ENCODE measurements at regions of chr15 and their contacts with region 1.

Region 1: DNA sequence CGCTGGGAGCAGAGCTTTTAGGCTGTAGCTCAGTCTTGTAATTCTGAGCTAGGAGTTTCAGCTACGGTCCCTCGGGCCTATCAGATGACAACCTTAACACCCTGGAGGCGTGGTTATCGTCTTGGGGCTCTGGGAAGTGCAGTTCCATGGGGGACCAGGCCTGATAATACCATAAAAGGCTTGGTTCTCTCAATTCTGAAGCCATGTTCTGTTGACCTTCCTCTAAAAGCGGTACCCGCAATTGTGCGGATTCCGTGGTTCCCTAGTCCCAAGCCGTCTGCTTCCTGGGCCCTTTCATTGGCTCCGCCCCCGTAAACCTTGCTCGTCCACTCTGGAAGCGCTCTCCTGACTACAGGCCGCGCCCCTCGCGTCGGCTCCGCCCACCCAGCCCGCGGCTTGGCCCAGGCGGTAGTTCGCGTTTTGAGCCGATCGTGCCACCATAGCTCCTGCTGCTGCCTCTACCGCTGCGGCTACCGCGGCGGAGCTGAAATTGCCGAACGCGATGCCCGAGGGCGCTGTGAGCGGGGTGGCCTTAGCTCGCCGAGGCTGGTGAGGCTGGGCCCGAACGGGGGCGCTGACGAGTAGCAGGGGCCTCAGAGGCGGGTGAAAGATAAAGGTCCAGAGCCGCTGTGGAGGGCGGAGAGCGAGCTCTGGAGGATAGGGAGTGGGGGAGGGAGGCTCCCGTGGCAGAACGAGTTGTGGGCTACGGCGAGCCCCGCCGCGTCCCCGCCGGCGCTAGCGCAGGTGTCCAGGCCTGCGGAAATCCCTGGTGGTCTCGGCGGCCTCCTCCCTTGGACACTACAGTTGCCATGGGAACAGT is at the start of gene MAPKBP1:
- DNase-seq: peak; percentile 98 to 99 (median 98)
- ATAC-seq: peak; percentile 93 to 97 (median 96)
- H3K4me3 ChIP-seq: peak within 1 kb of the TSS; percentile 66 to 89 (median 83)
- H3K27ac ChIP-seq: peak within 1 kb of the TSS; percentile 59 to 77 (median 70)
- H3K4me1 ChIP-seq: peaks cover 0 to 29% (median 9%) of the 10 kb centered on the region in 4 donors
- H3K27me3 ChIP-seq: no peaks in the 10 kb centered on the region
- CTCF ChIP-seq: peak; percentile 47 to 71 (median 64)
- POLR2A ChIP-seq: peak; percentile 43
- total RNA-seq, gene MAPKBP1: 4.3 to 7.9 (median 5.7) TPM

Region 2: DNA sequence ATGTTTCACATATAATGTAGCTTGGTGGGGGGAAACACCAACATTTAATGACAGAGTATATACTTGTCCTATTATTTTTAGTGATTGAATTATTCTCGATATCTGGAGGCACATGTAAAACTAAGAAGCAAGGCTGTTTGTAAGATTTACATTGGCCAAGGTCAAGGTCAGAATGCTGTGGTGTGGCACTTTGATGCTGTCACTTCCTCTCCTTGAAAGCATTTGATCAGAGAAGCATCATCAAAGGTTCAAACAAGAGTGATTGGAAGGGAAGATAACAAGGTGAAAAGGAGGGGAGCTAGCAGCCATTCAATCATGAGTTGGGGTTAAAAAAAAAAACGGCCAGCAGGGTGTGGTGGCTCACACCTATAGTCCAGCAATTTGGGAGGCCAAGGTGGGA is 331.0 kb before region 1 on chr15:
- intact Hi-C with region 1: no loop called
- DNase-seq: no peak
- ATAC-seq: no peak
- H3K4me3 ChIP-seq: no peak overlapping the region
- H3K27ac ChIP-seq: no peak overlapping the region
- H3K4me1 ChIP-seq: no peaks in the 10 kb centered on the region
- H3K27me3 ChIP-seq: no peaks in the 10 kb centered on the region
- CTCF ChIP-seq: no peak
- POLR2A ChIP-seq: no peak

Region 3: DNA sequence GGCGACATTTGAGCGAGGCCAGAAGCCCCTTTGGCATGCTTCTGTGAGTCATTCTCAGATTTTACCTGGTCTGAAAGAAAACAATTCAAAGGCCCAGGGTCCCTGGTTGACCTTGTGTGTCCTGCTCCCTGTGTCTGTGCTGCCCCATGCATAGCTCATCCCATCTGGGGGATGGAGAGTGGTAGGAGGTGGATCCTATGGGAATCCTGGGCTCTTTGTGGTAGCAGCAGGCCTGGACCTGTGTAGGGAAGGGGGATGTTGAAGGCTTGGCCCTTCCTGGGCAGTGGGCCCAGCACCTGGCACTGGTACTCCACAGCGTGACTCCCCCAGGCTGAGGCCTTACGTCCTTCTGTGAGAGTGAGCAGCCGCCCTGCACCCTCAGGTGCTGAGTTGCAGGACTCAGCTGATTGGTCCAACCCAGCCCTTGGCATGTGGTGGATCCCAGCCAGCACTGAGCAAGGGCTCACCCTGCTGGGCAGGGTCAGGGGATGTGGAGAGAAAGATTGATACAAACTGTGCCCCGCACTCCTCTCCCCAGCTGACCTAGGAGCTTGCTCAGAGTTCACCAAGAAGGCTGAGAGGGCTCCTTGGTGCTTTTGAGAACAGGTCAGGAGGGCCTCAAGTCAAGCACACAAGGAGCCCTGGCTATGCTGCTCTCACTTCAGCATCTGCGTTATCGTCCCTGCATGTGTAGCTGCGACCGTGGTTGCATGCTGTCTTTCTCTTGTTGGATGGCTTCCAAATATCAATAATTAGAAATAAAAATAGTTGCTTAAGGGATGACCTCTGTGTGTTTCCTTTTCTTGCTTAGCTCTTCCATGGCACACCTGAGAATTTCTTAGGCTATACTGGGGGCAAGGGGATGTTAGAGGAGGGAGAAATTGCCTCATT is 32.3 kb after region 1 on chr15:
- intact Hi-C with region 1: loop called (anchors 5 kb)
- DNase-seq: no peak
- ATAC-seq: peak; percentile 24 to 54 (median 50)
- H3K4me3 ChIP-seq: no peak overlapping the region
- H3K27ac ChIP-seq: no peak overlapping the region
- H3K4me1 ChIP-seq: no peaks in the 10 kb centered on the region
- H3K27me3 ChIP-seq: no peaks in the 10 kb centered on the region
- CTCF ChIP-seq: no peak
- POLR2A ChIP-seq: no peak

Region 4: DNA sequence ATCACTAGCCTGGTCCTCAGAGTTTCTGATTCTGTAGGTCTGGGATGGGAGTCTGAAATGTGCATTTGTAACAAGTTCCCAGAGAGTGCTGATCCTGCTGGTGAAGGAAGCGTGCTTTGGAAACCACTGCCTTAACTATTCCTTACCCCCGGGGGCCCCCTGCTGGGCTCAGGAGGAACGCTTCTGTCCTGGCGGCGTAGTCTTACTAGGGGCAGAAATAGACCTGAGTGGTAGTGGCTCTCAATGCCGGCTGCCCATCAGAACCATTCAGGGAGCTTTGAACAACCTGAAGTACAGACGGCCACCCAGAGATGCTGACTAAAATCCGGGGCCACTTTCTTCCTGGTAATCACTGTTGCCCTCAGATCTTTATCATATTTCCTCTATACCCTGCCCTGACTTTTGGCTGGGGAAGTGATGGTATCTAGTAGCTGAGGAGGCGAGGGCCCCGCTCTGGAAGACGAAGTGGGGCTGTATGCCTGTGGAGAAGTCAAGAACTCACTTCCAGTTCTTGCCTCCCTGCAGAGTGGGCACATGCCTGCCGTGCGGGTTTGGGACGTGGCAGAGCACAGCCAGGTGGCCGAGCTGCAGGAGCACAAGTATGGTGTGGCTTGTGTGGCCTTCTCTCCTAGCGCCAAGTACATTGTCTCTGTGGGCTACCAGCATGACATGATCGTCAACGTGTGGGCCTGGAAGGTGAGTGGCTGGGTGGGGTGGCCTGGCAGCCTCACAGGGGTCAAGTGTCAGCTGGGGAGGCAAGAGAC is 37.3 kb after region 1 on chr15:
- intact Hi-C with region 1: loop called (anchors 5 kb)
- DNase-seq: peak; percentile 83 to 86 (median 83)
- ATAC-seq: peak; percentile 94 to 98 (median 97)
- H3K4me3 ChIP-seq: no peak overlapping the region
- H3K27ac ChIP-seq: no peak overlapping the region
- H3K4me1 ChIP-seq: no peaks in the 10 kb centered on the region
- H3K27me3 ChIP-seq: no peaks in the 10 kb centered on the region
- CTCF ChIP-seq: peak; percentile 84 to 90 (median 87)
- POLR2A ChIP-seq: no peak